Esophagus squamous epithelium (tissue), 5 donors: ENCODE measurements at regions of chr16 and their contacts with region 1.

Region 1: GRCh38 chr16:11506741-11507305 is 79.9 kb downstream of the LITAF start:
- DNase-seq: no peak
- H3K4me3 ChIP-seq: no peak overlapping the region
- H3K27ac ChIP-seq: no peak overlapping the region
- H3K4me1 ChIP-seq: no peaks in the 10 kb centered on the region
- H3K27me3 ChIP-seq: no peaks in the 10 kb centered on the region
- CTCF ChIP-seq: no peak
- POLR2A ChIP-seq: no peak

Region 2: DNA sequence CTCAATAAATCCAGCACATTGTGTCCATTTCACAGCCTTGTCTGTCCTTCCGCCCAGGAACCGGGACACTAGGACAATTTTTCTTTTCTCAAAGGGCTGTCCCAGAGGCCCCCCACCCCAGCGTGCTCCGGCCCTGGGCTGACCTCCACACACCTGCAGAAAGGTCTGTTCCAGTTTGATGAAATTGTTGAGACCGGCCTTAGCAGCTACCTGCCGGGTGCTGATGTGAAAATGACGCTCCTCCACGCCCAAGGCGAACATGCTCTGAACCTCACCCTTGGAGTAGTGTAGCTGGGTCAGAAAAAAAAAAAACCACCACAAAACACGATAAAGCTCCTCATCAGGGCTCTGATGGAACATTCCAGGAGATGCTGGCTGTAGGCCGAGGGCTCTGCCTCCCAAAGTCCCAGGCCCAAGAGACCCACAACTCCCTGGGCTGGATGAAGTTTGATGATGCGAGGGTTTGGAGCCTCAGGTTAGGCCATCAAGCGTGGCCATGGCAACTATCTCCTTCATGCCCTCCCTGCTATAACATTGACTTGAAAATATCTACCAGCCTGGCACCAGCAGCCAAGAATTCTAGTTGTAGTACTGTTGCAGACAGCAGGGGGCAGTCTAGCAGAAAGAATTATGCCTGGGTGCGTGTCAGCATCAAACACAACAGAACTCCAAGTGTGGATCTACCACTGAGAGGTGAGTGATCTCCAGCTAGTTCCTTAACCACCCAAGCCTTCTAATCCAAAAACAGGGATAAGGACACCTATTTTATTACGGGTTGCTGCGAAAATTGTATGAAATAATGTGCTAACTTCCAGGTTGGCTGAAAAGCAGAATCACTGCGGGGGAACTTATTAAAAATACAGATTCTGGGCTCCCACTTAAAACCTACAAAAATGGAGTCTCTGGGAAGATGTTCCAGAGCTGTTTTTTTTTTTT is 99.5 kb before region 1 on chr16:
- intact Hi-C with region 1: loop called (anchors 10 kb)
- DNase-seq: no peak
- H3K4me3 ChIP-seq: no peak overlapping the region
- H3K27ac ChIP-seq: no peak overlapping the region
- H3K4me1 ChIP-seq: no peaks in the 10 kb centered on the region
- H3K27me3 ChIP-seq: no peaks in the 10 kb centered on the region
- CTCF ChIP-seq: peak; percentile 40 to 83 (median 76)
- POLR2A ChIP-seq: no peak

Region 3: GRCh38 chr16:11431915-11432465 is 74.8 kb before region 1 on chr16:
- intact Hi-C with region 1: no loop called
- DNase-seq: no peak
- H3K4me3 ChIP-seq: no peak overlapping the region
- H3K27ac ChIP-seq: no peak overlapping the region
- H3K4me1 ChIP-seq: no peaks in the 10 kb centered on the region
- H3K27me3 ChIP-seq: peaks cover 0 to 5% (median 0%) of the 10 kb centered on the region in 4 donors
- CTCF ChIP-seq: no peak
- POLR2A ChIP-seq: no peak